Right ventricle myocardium inferior (tissue), 1 donor: ENCODE measurements at regions of chr6 and their contacts with region 1.

Region 1: DNA sequence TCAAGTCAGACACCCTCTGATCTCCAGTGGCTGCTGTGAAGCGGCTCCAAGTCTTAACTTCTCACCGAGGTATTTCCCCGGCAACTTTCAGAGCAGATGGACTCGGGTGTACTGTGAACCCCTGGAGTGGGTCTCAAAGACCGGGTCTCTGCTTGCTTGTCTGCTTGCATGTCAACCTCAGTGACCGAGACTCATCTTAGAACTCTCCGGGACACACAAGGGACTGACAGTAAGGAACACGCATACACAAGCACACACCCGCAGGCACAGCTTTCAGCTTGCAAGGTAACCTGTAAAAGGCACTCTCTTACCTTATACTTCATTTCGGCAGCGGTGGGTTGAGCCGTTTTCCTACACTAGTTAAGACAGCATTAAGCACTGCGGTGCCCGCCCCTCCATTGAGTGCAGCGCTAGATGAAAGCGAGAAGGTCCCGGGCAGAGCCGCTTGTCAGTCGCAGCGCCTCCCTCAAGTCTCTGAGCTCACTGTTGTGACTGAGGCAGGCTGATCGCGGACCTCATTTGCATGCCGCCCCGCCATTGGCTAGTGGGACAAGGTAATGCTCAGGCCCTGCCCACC is at the start of gene NEDD9:
- DNase-seq: peak; percentile 97
- ATAC-seq: peak; percentile 99
- total RNA-seq, gene NEDD9: 29.3 TPM

Region 2: DNA sequence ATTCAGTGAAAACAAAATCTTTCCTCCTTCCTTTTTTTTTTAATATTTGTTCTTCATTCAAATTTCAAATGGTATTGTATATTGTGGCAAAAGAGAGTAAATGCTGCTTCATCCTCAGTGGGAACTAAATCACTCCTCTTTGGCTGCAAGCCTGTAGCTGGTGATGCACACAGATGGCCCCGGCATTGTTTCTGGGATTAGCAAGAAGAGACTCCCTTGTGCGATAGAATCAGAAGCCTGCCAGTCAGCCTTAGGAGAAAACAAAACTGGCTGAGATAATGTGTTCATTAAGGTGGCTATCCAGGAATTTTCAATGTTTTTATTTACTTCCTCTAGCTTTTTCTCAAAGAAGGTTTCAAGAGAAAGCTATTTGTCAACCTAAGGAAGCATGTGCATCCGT is 167.4 kb before region 1 on chr6:
- intact Hi-C with region 1: no loop called
- DNase-seq: no peak
- ATAC-seq: no peak

Region 3: DNA sequence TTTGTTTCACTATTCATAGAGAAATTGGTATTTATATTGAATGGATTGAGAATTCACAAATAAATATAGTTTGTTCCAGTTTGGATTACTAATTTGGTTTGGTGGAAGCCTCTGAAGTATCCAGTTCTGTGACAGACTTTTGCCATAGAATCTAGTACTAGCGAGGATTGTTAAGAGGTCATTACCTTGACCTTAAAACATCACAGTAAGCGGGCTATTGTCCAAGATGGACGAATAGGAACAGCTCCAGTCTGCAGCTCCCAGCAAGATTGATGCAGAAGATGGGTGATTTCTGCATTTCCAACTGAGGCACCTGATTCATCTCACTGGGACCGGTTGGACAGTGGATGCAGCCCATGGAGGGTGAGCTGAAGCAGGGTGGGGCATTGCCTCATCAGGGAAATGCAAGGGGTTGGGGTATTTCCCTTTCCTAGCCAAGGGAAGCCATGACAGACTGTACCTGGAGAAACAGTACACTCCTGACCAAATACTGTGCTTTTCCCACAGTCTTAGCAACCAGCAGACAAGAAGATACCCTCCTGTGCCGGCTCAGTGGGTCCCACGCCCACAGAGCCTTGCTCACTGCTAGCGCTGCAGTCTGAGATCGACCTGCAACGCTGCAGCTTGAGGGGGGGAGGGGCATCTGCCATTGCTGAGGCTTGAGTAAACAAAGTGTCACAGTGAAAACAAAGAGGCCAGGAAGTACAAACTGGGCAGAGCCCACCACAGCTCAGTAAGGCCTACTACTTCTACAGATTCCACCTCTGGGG is 66.6 kb after region 1 on chr6:
- intact Hi-C with region 1: no loop called
- DNase-seq: no peak
- ATAC-seq: no peak

Region 4: DNA sequence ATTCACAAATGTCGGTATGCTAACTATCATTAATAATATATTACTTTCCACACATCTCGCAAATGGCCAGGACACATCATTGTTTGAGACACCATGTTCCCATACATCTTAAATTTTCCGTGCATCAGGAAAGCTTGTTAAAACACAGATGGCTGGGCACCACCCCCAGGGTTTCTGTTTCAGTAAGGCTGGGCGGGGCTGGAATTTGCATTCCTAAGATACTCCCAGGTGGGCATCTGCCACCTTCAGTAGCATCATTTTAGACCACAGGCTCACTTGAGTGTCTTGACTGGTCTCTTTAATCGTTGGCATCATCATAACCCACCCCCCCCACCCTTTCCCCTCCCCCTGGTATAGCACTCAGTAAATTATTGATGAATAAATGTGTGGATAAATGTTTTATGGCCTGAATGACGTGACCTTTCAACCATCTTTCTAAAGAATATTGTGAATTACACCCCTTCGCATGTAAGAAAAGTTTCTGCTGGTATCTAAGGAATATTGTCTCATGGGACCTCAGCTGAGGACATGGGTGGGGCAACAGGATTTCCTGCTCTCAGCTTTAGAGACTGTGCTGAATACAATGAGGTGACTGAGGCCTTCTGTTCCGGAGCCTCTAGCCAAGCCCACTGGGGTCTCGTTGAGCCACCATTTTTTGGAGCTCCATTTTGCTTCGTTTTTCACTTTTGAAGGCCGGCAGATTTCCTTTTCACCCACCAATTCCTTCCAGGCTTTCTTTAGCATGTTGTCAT is 124.3 kb after region 1 on chr6:
- intact Hi-C with region 1: loop called (anchors 2 kb)
- DNase-seq: no peak
- ATAC-seq: peak; percentile 66